ENCODE measurements at regions of chr1 and their contacts with region 1.

Region 1: GRCh38 chr1:219812491-219813203 is 115.7 kb downstream of the SLC30A10 start:
- DNase-seq: peak; percentile 77 to 81
- ATAC-seq: peak; percentile 87 to 98
- H3K4me3 ChIP-seq: no peak overlapping the region
- H3K27ac ChIP-seq: no peak overlapping the region
- H3K4me1 ChIP-seq: peaks cover 3% of the 10 kb centered on the region; the same call in 1 of the 3 replicates
- CTCF ChIP-seq: peak; percentile 82
- EP300 ChIP-seq: no peak
- POLR2A ChIP-seq: no peak
- RAD21 ChIP-seq: peak; percentile 92 to 93

Region 2: DNA sequence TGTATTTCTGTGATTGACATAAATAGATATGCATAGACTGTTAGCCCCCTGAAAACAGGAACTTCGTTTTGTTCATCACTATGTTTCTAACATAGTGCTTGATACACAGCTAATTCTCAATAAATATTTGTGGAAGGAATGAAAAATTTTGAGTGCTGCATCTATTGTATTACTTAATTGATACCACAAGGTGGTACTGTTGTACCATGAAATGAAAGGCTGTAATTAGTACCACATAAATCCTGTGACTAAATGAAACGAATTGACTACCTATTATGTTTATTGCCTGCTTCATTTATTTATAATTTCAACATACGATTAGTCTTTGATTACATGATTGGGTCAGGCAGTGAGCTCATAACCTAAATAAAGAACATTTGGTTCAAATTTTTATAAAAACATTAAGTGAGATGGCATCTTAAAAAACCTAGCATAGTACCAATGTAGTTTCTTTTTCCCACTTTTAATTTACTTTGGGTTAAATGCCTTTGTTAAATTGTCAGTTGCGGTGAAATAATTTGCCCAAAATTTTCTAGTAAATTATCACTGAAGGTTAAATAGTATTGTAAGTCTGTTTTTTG is 1482.5 kb before region 1 on chr1:
- CTCF ChIA-PET with region 1: interaction called, 46 read pairs
- POLR2A ChIA-PET with region 1: no interaction called
- DNase-seq: peak; percentile 43 to 53
- ATAC-seq: peak in 1 of 2 experiments; percentile 60; a peak in 3 of 6 replicates
- H3K4me3 ChIP-seq: no peak overlapping the region
- H3K27ac ChIP-seq: peak overlapping the region in 1 of 2 experiments; percentile 56; a peak in 3 of 6 replicates
- H3K4me1 ChIP-seq: peaks cover 17% of the 10 kb centered on the region; the same call in 2 of the 3 replicates
- CTCF ChIP-seq: peak; percentile 92
- EP300 ChIP-seq: no peak
- POLR2A ChIP-seq: no peak
- RAD21 ChIP-seq: peak; percentile 95 to 96

Region 3: GRCh38 chr1:219798283-219799030 is 14.2 kb before region 1 on chr1:
- CTCF ChIA-PET with region 1: interaction called, 38 read pairs
- POLR2A ChIA-PET with region 1: no interaction called
- DNase-seq: no peak
- ATAC-seq: no peak
- H3K4me3 ChIP-seq: no peak overlapping the region
- H3K27ac ChIP-seq: no peak overlapping the region
- H3K4me1 ChIP-seq: no peaks in the 10 kb centered on the region
- CTCF ChIP-seq: no peak
- EP300 ChIP-seq: no peak
- POLR2A ChIP-seq: no peak
- RAD21 ChIP-seq: no peak

Region 4: DNA sequence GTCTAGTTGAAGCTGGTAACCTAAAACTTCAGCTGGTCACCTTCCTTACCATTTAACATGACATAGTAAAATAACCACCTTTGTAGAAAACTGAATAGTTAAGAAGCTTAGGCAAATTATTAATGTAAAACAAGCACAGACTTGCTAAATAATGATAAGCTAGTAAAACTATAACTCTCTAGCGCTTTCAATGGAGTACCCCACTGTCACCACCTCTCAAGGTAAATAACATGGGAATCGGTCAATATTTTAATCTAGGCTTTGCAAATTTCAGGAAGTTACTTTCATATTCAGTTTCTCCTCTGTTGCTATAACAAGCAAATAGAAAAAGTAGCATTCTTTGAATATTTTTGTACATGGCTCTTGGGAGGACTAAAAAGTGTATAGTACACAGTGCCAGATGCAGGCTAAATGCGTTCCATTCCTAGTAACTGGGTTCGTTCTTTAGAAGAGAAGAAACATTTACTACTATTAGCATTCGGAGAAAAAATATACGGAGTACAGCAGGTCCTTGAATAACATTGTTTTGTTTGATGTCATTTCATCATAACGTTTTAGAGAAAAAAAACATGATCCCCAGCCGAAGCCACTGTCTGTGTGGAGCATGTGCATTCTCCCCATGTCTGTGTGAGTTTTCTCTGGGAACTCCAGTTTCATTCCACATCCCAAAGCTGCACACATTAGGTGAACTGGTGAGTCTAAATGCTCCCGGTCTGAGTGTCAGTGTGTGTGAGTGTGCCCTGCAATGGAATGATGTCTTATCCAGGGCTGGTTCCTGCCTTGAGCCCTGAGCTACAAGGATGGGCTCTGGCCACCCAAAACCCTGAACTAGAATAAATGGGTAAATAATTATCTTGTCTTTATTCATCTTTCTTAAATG is 181.1 kb after region 1 on chr1:
- CTCF ChIA-PET with region 1: no interaction called
- POLR2A ChIA-PET with region 1: no interaction called
- DNase-seq: no peak
- ATAC-seq: no peak
- H3K4me3 ChIP-seq: no peak overlapping the region
- H3K27ac ChIP-seq: no peak overlapping the region
- H3K4me1 ChIP-seq: peaks cover 6% of the 10 kb centered on the region; the same call in 2 of the 3 replicates
- CTCF ChIP-seq: no peak
- EP300 ChIP-seq: no peak
- POLR2A ChIP-seq: no peak
- RAD21 ChIP-seq: no peak